ENCODE measurements at regions of chr21 and their contacts with region 1.

Region 1: DNA sequence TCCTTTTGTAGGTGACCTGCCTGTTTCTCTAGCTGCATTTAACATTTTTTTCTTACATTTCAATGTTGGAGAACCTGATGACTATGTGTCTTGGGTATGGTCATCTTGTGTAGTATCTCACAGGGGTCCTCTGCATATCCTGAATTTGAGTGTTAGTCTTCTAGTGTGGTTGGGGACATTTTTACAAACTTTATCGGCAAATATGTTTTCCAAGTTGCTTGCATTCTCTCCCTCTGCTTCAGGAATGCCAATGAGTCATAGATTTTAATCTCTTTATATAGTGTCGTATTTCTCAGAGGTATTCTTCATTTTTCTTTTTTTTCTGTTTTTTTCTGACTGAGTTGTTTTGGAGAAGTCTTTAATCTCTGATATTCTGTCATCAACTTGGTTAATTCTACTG is 684.0 kb downstream of the NCAM2 start:
- DNase-seq: no peak
- ATAC-seq: no peak

Region 2: GRCh38 chr21:22855581-22855980 is 1173.4 kb after region 1 on chr21:
- intact Hi-C with region 1: loop called (anchors 5 kb)
- DNase-seq: no peak
- ATAC-seq: no peak

Measured in sciatic nerve (tissue), 2 donors.